H1 (cell line): ENCODE measurements at regions of chr5 and their contacts with region 1.

Region 1: GRCh38 chr5:88268385-88269184 is at the start of gene TMEM161B:
- DNase-seq: peak; percentile 69 to 82
- H3K4me3 ChIP-seq: peak within 1 kb of the TSS; percentile 85 to 100 (median 90)
- H3K27ac ChIP-seq: peak within 1 kb of the TSS; percentile 74; the same call in 1 of the 2 replicates
- H3K4me1 ChIP-seq: peaks cover 0 to 6% (median 4%) of the 10 kb centered on the region in 4 experiments; a peak in 4 of 7 replicates
- H3K27me3 ChIP-seq: no peaks in the 10 kb centered on the region
- CTCF ChIP-seq: no peak
- EP300 ChIP-seq: no peak; a peak in 1 of 3 replicates
- POLR2A ChIP-seq: peak in 1 of 2 experiments; percentile 54; a peak in 1 of 3 replicates
- RAD21 ChIP-seq: 0 out of 4 replicates have a peak, but pooled peaks of 1 of the 2 experiments have one; percentile 4
- total RNA-seq, gene TMEM161B: 13.6 and 13.8 TPM in 2 replicates

Region 2: GRCh38 chr5:88256872-88257271 is 11.7 kb before region 1 on chr5:
- CTCF ChIA-PET with region 1: no interaction called
- POLR2A ChIA-PET with region 1: interaction called, 12 read pairs
- DNase-seq: peak; percentile 54 to 63
- H3K4me3 ChIP-seq: peak overlapping the region in 1 of 4 experiments; percentile 40; a peak in 1 of 8 replicates
- H3K27ac ChIP-seq: peak overlapping the region; percentile 72; the same call in 1 of the 2 replicates
- H3K4me1 ChIP-seq: peaks cover 0 to 21% (median 5%) of the 10 kb centered on the region in 4 experiments; a peak in 5 of 7 replicates
- H3K27me3 ChIP-seq: no peaks in the 10 kb centered on the region
- CTCF ChIP-seq: no peak
- EP300 ChIP-seq: peak in 1 of 2 experiments; percentile 45; a peak in 1 of 3 replicates
- POLR2A ChIP-seq: no peak; a peak in 1 of 3 replicates
- RAD21 ChIP-seq: peak; percentile 6 to 17; a peak in 1 of 4 replicates

Region 3: GRCh38 chr5:88279584-88279983 is 11.0 kb after region 1 on chr5:
- CTCF ChIA-PET with region 1: no interaction called
- POLR2A ChIA-PET with region 1: interaction called, 20 read pairs
- DNase-seq: no peak
- H3K4me3 ChIP-seq: no peak overlapping the region
- H3K27ac ChIP-seq: no peak overlapping the region
- H3K4me1 ChIP-seq: no peaks in the 10 kb centered on the region
- H3K27me3 ChIP-seq: no peaks in the 10 kb centered on the region; a peak in 1 of 7 replicates
- CTCF ChIP-seq: no peak
- EP300 ChIP-seq: no peak
- POLR2A ChIP-seq: peak in 1 of 2 experiments; percentile 19; a peak in 1 of 3 replicates
- RAD21 ChIP-seq: no peak